OCI-LY7 (cell line): ENCODE measurements at regions of chr6 and their contacts with region 1.

Region 1: DNA sequence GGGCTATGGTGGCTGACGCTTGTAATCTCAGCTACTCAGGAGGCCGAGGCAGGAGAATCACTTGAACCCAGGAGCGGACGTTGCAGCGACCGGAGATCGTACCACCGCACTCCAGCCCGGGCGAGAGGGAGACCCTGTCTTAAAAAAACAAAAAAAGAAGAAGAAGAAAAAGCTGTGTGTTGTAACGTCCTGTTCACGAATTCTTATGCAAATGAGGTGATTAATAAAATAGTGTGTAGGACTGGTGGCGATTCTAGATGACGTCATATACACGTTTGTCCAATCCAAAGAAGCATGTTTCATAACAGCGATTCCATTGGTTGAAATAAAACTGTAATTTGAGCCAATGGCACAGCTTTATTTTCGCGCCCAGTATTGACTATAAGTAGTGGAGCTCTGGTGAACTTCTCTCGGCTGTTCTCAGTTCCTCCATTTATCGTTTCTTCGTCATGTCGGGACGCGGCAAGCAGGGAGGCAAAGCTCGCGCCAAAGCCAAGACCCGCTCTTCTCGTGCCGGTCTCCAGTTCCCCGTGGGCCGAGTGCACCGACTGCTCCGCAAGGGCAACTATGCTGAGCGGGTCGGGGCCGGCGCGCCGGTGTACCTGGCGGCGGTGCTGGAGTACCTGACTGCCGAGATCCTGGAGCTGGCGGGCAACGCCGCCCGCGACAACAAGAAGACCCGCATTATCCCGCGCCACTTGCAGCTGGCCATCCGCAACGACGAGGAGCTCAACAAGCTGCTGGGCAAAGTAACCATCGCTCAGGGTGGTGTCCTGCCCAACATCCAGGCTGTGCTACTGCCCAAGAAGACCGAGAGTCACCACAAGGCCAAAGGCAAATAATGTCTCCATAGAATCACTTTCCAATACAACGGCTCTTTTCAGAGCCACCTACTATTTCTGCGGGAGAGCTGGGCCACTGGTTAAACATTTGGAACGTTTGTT is 47.0 kb downstream of the OR2B2 start:
- DNase-seq: peak; percentile 99
- H3K4me3 ChIP-seq: peak overlapping the region; percentile 67
- H3K27ac ChIP-seq: peak overlapping the region; percentile 99
- H3K4me1 ChIP-seq: peaks cover 60% of the 10 kb centered on the region
- CTCF ChIP-seq: no peak

Region 2: GRCh38 chr6:27138837-27139755 is 726.1 kb before region 1 on chr6:
- CTCF ChIA-PET with region 1: no interaction called
- POLR2A ChIA-PET with region 1: interaction called, 34 read pairs
- intact Hi-C with region 1: loop called (anchors 2 kb)
- DNase-seq: peak; percentile 95
- H3K4me3 ChIP-seq: peak overlapping the region; percentile 77
- H3K27ac ChIP-seq: peak overlapping the region; percentile 99
- H3K4me1 ChIP-seq: peaks cover 78% of the 10 kb centered on the region
- CTCF ChIP-seq: no peak

Region 3: GRCh38 chr6:27825025-27825793 is 40.0 kb before region 1 on chr6:
- CTCF ChIA-PET with region 1: interaction called, 3 read pairs
- POLR2A ChIA-PET with region 1: interaction called, 1,237 read pairs
- intact Hi-C with region 1: no loop called
- DNase-seq: peak; percentile 72
- H3K4me3 ChIP-seq: peak overlapping the region; percentile 71
- H3K27ac ChIP-seq: peak overlapping the region; percentile 93
- H3K4me1 ChIP-seq: peaks cover 46% of the 10 kb centered on the region
- CTCF ChIP-seq: no peak

Region 4: DNA sequence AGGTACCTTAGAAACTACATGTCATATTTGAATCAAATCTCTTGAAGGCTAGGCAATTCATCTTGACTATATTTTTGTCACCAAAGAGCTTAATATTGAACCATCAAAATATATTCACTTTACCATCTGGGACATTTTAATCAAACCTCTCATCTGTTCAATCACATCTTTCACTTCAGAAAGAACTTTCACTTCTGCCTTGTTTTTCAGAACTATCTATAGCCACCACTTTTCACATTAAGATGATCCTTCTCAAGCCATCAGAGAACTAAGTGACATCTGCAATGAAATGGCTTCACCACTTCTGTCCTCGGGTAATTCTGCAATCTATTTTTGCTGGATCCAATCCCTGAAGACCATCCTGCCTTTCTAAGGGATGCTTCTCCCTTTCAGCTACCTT is 10.8 kb before region 1 on chr6:
- CTCF ChIA-PET with region 1: no interaction called
- POLR2A ChIA-PET with region 1: interaction called, 52 read pairs
- intact Hi-C with region 1: no loop called
- DNase-seq: peak; percentile 57
- H3K4me3 ChIP-seq: peak overlapping the region; percentile 31
- H3K27ac ChIP-seq: peak overlapping the region; percentile 83
- H3K4me1 ChIP-seq: peaks cover 47% of the 10 kb centered on the region
- CTCF ChIP-seq: no peak

Region 5: DNA sequence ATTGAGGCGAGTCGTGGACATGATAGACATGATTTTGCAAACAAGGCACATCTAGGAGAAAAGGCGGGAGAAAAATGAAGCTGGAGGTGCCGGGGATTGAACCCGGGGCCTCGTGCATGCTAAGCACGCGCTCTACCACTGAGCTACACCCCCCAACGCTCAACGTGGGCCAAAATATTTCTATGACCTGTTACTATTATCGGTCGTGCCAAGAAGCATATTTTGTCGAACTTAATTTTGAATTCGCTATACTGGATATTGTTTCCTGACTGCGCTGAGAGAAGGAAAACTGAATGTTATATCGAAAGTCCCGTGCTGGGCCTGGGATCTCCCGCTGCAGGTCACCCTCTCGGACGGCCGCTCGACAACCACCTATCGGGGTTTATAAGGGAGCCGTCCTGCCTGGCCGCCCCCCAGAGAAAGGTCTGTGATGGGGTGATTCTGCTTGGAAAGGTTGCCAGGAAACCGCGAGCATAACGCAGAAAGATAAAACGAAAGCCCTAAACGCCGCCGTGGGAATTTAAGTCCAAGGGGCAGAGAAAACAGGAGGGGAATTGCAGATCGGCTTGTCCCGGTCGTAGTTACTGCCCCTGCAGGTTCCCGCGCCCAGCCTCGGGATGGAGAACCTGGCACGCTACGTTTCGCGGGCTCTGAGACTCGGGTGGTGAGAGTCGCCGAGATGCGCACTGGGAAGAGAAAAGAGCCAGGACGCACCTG is 998.6 kb after region 1 on chr6:
- CTCF ChIA-PET with region 1: no interaction called
- POLR2A ChIA-PET with region 1: interaction called, 11 read pairs
- intact Hi-C with region 1: no loop called
- DNase-seq: peak; percentile 79
- H3K4me3 ChIP-seq: peak overlapping the region; percentile 80
- H3K27ac ChIP-seq: peak overlapping the region; percentile 37
- H3K4me1 ChIP-seq: peaks cover 37% of the 10 kb centered on the region
- CTCF ChIP-seq: no peak